H1 (cell line): ENCODE measurements at regions of chr11 and their contacts with region 1.

Region 1: DNA sequence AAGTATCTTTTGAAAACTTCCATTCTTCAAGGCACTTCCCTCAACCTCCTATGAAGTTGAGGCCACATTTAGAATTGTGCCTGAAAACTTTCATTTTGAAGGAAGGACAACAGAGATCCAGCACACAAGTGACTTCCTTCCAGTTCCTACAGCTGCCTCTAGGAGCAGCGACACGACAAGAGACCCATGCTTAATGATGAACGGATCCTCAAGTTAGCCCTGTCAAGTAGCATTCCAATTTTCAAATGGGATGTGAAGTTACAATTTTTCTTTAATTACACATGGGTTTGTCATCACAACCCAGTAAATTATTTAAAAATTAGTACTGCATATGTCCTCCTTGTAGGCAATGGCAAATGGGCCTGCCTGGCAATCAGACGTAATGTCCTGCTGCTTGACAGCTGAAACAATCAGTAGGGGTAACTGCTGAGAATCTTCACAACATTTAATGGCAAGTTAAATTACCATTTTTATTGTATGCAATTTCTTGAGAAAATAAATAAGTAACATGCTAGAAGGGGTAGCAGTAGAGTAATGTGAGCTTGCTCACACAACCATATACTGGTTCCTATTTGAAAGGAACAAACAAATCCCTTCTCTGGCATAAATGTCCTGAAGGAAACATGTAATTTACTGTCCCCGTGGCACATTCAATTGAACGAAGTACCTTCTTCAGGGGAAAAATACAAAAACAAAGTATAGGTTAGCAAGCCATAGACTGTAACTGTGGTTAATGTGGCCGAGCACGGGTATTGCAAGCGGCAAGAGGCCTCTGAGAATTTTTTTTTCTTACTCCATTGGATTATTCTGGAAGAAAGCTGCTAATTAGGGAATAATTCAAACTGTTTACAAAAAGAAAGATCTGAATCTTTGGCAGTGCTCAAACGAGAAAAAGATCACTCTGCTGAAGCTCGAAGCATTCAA is 288.3 kb downstream of the CADM1 start:
- DNase-seq: no peak
- H3K4me3 ChIP-seq: no peak overlapping the region
- H3K27ac ChIP-seq: no peak overlapping the region
- H3K4me1 ChIP-seq: peaks cover 0 to 4% (median 0%) of the 10 kb centered on the region in 4 experiments; a peak in 1 of 7 replicates
- H3K27me3 ChIP-seq: no peaks in the 10 kb centered on the region
- CTCF ChIP-seq: peak; percentile 44 to 74 (median 69)
- EP300 ChIP-seq: no peak
- POLR2A ChIP-seq: no peak
- RAD21 ChIP-seq: peak; percentile 47 to 54; a peak in 3 of 4 replicates

Region 2: DNA sequence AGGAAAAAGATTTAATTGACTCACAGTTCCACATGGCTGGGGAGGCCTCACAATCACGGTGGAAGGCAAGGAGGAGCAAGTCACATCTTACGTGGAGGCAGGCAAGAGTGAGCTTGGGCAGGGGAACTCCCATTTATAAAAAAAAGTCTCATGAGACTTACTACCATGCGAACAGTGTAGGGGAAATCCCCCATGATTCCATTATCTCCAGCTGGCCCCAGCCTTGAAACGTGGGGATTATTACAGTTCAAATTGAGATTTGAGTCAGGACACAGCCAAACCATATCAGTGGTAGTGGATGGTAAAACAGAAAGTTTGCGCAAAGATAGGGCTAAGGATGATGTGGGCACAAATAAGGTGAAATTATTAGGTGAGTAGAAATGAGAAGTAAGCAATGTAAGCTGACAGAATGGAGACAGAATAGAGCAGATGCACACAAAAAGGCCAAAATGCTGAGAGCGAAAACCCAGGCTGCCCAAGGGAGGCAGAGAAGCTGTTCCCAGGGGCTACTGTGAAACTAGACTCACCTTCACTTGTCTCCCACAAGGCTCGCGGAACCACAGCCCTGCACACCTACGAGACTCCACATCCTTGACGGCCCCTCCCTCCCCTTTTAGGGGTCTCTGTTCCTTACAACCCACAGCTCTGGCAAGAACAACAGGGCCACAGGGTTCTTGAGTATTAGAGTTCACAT is 89.3 kb before region 1 on chr11:
- CTCF ChIA-PET with region 1: no interaction called
- POLR2A ChIA-PET with region 1: no interaction called
- DNase-seq: no peak
- H3K4me3 ChIP-seq: no peak overlapping the region
- H3K27ac ChIP-seq: no peak overlapping the region
- H3K4me1 ChIP-seq: peaks cover 0 to 4% (median 0%) of the 10 kb centered on the region in 4 experiments; a peak in 3 of 7 replicates
- H3K27me3 ChIP-seq: no peaks in the 10 kb centered on the region; a peak in 1 of 7 replicates
- CTCF ChIP-seq: no peak
- EP300 ChIP-seq: no peak
- POLR2A ChIP-seq: no peak
- RAD21 ChIP-seq: no peak

Region 3: DNA sequence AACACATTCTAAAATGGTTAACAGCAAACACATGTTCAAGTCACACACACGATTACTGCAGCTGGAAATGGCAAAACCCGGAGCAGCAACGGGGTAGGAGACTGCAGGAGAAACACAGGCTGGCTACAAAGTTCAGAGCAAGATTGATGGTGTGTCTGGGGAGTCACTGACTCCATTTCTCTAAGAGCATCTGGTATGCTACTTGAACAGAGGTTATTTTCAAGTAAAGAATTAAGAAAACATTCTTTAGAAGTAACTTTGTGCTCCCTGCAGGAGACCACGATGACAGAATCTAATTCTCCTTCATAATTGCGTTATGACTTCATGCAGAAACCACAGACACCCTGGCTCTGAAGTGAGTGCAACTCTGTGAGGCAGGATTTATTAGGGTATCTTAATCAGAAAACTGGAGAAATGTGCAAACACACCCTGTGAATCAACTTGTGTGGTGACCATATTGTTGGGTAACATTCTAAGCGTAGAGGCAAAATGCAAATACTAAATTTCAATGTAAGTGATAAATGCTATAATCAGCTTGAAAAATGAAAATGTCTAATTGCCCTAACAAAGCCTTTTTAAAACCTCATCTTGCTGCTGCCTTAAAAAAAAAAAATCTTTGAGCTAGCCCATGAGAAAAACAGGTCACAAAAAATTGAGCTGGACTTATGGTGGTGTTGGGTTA is 14.7 kb before region 1 on chr11:
- CTCF ChIA-PET with region 1: interaction called, 19 read pairs
- POLR2A ChIA-PET with region 1: interaction called, 3 read pairs
- DNase-seq: no peak
- H3K4me3 ChIP-seq: no peak overlapping the region
- H3K27ac ChIP-seq: no peak overlapping the region
- H3K4me1 ChIP-seq: peaks cover 0 to 10% (median 6%) of the 10 kb centered on the region in 4 experiments; a peak in 4 of 7 replicates
- H3K27me3 ChIP-seq: no peaks in the 10 kb centered on the region; a peak in 1 of 7 replicates
- CTCF ChIP-seq: no peak
- EP300 ChIP-seq: no peak
- POLR2A ChIP-seq: no peak
- RAD21 ChIP-seq: no peak

Region 4: DNA sequence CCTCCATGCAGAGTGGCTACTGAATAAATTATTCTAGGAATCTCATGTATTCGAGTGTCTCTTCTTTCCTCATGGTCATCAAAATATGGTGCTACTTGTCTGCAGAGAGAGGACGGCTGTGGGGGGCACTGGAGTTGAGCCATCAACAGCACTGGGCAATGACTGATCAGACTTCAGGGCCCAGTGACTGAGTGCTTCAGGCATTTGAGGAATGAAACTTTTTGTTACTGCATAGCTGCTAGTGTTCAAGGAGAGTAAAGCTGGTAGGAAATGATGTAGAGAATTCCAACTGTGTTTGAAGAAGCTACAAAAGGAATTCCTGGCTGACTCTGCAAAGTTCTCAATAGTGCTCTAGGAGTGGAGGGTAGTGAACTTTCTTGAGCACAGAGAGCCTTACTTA is 10.6 kb after region 1 on chr11:
- CTCF ChIA-PET with region 1: interaction called, 19 read pairs
- POLR2A ChIA-PET with region 1: interaction called, 7 read pairs
- DNase-seq: peak; percentile 53 to 70
- H3K4me3 ChIP-seq: no peak overlapping the region
- H3K27ac ChIP-seq: no peak overlapping the region; the same call in 1 of the 2 replicates
- H3K4me1 ChIP-seq: peaks cover 4 to 13% (median 13%) of the 10 kb centered on the region in 4 experiments
- H3K27me3 ChIP-seq: no peaks in the 10 kb centered on the region
- CTCF ChIP-seq: no peak
- EP300 ChIP-seq: no peak
- POLR2A ChIP-seq: 0 out of 3 replicates have a peak, but pooled peaks of 1 of the 2 experiments have one; percentile 22
- RAD21 ChIP-seq: no peak

Region 5: DNA sequence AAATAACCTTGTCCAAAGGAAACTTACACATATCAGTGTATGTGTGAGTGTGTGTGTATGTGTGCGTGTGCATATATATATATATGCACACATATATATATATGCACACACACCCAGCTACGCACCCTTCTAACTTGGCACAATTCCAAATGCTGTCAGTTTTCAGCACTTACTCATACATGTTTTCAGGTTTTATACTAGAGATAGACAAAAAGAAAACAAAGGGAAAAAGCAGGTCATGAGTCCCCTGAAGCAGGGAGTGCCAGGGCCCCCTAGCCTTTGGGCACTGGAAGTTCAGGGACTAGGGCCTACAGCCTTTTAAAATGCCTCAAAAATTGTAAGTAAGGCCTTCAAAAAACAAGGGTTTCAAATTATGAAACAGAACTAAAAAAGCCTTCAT is 22.8 kb after region 1 on chr11:
- CTCF ChIA-PET with region 1: interaction called, 15 read pairs
- POLR2A ChIA-PET with region 1: no interaction called
- DNase-seq: no peak
- H3K4me3 ChIP-seq: no peak overlapping the region
- H3K27ac ChIP-seq: no peak overlapping the region
- H3K4me1 ChIP-seq: no peaks in the 10 kb centered on the region
- H3K27me3 ChIP-seq: no peaks in the 10 kb centered on the region
- CTCF ChIP-seq: peak; percentile 36 to 53 (median 41); a peak in 3 of 4 replicates
- EP300 ChIP-seq: no peak
- POLR2A ChIP-seq: no peak
- RAD21 ChIP-seq: peak; percentile 59 to 70

Region 6: DNA sequence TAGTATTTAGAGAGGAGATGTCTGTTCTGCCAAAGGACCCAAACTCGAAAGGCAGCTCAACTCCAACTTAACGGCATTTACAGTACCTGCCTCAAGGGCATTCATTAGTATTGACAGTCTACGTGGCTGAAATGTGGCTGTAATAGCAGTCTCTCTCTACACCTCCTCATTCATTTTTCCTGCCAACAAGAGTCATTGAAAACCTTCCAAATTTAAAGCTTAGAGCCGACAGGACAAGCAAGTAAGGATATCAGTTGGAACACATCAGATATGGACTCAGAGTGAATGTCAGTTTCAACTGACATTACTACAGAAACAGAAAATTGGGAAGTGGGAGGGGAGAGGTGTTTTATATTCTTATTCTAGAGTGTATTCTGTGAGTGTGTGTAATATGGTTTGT is 35.2 kb after region 1 on chr11:
- CTCF ChIA-PET with region 1: interaction called, 18 read pairs
- POLR2A ChIA-PET with region 1: no interaction called
- DNase-seq: no peak
- H3K4me3 ChIP-seq: no peak overlapping the region
- H3K27ac ChIP-seq: no peak overlapping the region
- H3K4me1 ChIP-seq: peaks cover 0 to 3% (median under 1%) of the 10 kb centered on the region in 4 experiments; a peak in 3 of 7 replicates
- H3K27me3 ChIP-seq: no peaks in the 10 kb centered on the region
- CTCF ChIP-seq: no peak
- EP300 ChIP-seq: no peak
- POLR2A ChIP-seq: no peak
- RAD21 ChIP-seq: no peak

Region 7: DNA sequence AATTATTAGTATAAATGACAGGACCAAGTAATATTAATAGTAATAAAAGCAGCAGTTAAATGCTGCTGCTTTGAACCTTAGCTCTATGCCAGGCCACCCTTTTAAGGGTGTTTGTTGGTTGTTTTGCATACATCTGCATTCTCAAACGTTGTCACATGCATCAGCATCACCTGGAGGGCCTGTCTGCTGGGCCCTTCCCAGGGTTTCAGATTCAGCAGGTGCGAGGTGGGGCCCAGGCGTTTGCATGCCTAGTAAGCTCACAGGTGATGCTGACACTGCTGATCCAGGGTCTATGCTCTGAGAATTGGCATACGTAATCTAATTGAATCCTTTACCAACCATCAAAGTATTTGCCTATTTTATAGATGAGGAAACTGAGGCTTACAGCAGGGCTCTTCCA is 41.7 kb after region 1 on chr11:
- CTCF ChIA-PET with region 1: interaction called, 18 read pairs
- POLR2A ChIA-PET with region 1: no interaction called
- DNase-seq: no peak
- H3K4me3 ChIP-seq: no peak overlapping the region
- H3K27ac ChIP-seq: no peak overlapping the region
- H3K4me1 ChIP-seq: peaks cover 0 to 16% (median 6%) of the 10 kb centered on the region in 4 experiments; a peak in 5 of 7 replicates
- H3K27me3 ChIP-seq: no peaks in the 10 kb centered on the region
- CTCF ChIP-seq: no peak
- EP300 ChIP-seq: peak in 1 of 2 experiments; percentile 44; a peak in 1 of 3 replicates
- POLR2A ChIP-seq: no peak
- RAD21 ChIP-seq: no peak

Region 8: DNA sequence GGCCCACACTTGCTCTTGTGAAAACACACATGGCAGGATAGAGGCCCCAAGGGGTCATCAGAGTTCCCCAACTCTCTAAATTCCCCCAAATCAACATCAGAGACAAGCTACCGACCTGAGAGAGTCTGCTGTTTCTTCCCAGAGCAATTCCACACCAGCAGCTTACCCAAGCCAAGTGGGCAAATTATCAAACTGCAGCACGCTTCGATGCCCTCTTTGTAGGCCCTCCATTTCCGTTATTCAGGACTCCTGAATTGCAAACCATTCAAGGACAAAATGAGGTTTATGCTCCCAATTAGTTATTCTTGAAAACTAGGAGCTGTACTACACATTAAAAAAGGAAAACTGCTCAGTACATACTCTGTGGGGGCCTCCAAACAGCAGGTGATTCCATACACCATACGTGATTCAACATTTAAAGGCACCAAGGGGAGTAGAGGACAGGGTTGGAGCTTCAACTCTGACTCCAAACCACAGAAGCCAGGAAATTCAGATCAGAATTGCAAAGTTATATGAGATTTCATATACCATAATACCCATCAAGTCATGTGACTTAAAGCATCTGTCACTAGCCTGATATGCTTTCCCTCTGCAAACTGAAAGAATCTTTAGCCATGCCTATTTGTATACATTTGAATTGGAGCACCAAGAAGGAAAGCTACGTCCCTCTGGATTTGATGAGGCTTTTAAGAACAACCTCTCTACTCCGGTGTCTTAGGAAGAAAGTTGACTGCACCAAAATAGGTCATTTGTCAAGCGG is 53.4 kb after region 1 on chr11:
- CTCF ChIA-PET with region 1: interaction called, 11 read pairs
- POLR2A ChIA-PET with region 1: no interaction called
- DNase-seq: no peak
- H3K4me3 ChIP-seq: no peak overlapping the region
- H3K27ac ChIP-seq: no peak overlapping the region
- H3K4me1 ChIP-seq: peaks cover 0 to 5% (median 1%) of the 10 kb centered on the region in 4 experiments; a peak in 2 of 7 replicates
- H3K27me3 ChIP-seq: no peaks in the 10 kb centered on the region
- CTCF ChIP-seq: no peak
- EP300 ChIP-seq: no peak
- POLR2A ChIP-seq: no peak
- RAD21 ChIP-seq: no peak